ENCODE measurements at regions of chr1 and their contacts with region 1.

Region 1: DNA sequence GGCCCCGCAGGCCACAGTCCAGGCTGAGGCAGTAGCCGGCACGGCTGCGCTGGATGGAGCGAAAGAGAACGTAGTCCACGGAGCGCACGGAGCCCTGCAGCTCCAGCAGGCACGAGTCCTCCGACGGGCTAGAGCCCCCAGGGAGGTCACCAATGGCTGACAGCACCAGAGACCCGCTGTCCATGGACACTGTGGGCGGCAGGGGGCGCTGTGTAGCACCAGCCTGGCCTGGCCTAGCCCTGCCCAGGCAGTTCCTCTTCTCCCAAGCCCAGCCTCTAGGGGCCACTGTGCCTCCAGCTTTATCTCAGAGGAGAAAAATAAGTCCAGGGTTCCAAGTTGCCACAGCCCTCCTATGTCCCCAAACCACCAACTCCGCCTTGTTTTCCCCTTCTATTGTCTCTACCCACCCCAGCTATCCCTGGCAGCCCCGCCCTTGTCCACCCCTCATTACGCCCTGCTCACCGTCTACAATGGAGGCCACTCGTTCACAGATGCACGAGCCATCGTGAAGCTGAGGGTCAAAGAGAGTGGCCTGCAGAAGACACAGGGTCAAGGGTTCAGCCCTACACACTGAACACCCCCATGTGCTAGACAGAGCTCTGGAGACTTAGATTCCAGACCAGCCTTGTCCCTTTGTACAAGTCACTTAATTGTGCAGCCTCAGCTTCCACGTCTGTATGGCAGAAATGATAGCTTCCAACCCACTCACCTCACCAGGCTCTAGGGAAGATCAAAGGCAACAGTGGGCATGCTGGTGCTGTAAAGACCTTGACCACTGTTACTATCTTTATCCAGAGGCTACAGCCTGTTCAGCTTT is 4.4 kb downstream of the ENTREP3 start:
- DNase-seq: no peak
- H3K4me3 ChIP-seq: no peak overlapping the region
- CTCF ChIP-seq: peak; percentile 100

Region 2: GRCh38 chr1:155172732-155173477 is 77.9 kb before region 1 on chr1 and contains the start of gene KRTCAP2:
- CTCF ChIA-PET with region 1: interaction called, 24 read pairs
- POLR2A ChIA-PET with region 1: interaction called, 3 read pairs
- DNase-seq: peak; percentile 75
- H3K4me3 ChIP-seq: peak within 1 kb of the TSS; percentile 98
- CTCF ChIP-seq: peak; percentile 96

Region 3: DNA sequence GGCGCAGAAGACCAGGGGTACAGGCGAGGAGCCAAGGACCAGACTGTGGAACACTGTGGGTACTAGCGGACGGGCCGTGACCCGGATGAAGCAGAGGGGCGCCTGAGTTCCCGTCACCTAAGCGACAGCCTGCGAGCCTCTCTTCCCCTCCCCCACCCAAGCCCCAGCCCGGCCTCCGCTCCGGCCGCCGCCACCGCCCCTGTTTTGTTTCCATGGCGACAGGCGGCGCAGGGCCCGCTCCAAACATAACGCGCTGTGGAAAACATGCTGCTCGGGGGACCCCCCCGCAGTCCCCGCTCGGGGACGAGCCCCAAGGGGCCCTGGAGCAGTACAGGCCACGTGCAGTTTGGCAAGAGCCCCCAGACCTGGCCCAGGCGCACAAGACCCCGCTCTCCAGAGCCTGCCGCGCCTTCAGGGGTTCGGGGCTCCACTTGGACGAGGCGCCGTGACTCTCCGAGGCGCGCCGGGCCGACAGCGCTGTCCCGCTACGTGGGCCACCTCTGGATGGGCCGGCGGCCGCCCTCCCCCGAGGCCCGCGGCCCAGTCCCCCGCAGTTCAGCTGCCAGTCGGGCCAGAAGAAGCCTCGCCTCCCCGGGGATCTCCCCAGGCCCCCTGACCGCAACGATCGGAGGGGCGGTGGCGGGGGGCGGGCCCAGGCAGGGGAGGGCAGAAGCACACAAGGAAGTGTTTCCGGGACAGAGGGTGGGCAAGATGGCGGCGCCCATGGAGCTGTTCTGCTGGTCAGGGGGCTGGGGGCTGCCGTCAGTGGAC is 42.1 kb before region 1 on chr1 and contains the start of gene MTX1:
- CTCF ChIA-PET with region 1: interaction called, 62 read pairs
- POLR2A ChIA-PET with region 1: interaction called, 4 read pairs
- DNase-seq: no peak
- H3K4me3 ChIP-seq: peak within 1 kb of the TSS; percentile 89
- CTCF ChIP-seq: no peak

Region 4: GRCh38 chr1:155236441-155236840 is 14.4 kb before region 1 on chr1:
- CTCF ChIA-PET with region 1: interaction called, 56 read pairs
- POLR2A ChIA-PET with region 1: no interaction called
- DNase-seq: no peak
- H3K4me3 ChIP-seq: no peak overlapping the region
- CTCF ChIP-seq: no peak

Region 5: DNA sequence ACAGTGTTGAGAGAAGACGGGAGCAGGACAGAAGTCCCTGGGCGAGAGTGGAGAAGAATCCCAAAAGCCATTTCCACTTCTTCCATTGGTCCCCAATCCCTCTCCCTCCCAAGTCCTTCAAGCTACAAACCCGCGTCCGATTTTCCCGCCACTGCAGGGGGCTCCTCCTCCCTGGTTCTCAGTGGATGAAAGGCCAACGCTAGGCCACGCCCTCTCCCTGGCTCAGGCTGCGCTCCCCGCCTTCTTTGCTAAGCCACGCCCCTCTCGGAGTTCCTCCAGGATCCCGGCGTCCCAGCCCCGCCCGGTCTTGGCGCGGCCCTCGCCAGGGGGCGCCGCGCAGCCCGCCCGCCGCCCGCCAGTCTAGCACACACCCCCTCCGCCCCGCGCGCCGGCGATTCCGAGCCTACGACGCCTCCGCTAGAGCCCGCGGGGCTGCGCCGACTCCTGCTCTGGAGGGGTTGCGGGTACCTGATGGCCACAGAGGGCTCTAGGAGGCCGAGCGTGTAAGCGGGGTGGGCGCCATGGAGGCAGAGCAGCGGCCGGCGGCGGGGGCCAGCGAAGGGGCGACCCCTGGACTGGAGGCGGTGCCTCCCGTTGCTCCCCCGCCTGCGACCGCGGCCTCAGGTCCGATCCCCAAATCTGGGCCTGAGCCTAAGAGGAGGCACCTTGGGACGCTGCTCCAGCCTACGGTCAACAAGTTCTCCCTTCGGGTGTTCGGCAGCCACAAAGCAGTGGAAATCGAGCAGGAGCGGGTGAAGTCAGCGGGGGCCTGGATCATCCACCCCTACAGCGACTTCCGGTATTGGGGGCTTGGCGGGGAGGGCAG is 26.4 kb after region 1 on chr1 and contains the start of gene HCN3:
- CTCF ChIA-PET with region 1: interaction called, 112 read pairs
- POLR2A ChIA-PET with region 1: no interaction called
- DNase-seq: peak; percentile 49
- H3K4me3 ChIP-seq: peak within 1 kb of the TSS; percentile 74
- CTCF ChIP-seq: peak; percentile 57

Region 6: DNA sequence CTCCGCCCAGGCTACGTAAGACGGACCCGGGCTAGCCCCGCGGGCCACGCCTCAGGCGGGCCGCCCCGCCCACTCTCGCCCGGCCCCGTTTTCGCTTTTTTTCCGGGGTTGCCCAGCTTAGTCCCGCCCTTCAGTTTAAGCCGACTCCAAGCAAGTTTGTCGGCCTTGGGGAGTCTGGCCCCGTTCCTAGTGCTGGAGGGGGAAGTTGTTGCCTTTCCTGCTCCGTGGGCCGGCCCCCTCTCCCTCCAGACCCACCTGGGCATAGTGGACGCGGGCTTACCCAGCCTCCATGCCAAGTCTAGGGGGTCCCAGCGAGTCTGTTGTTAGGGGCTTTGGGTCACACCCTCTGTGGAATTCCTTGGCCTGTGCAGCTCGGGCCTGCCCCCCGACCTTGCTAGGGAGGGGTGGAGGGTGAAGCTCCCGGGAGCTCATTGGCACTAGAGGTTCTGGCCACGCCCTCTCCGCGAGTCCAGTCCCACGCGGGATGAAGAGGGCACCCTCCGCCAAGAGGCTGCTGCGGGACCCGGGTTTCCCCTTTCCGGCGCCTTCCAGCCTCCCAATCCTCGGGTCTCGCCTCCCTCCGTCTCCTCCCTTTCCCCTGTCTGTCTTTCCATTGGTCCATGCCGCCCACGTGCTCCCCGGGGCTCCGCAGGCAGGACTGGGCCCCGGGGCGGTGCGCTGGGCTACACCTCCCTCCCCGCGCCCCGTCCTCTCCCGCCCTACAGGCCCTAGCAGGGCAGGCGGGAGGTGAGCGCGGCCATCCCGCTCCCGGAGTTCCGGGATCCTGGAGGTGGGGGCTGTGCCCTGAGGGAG is 73.2 kb after region 1 on chr1:
- CTCF ChIA-PET with region 1: interaction called, 253 read pairs
- POLR2A ChIA-PET with region 1: interaction called, 10 read pairs
- DNase-seq: peak; percentile 70
- H3K4me3 ChIP-seq: peak overlapping the region; percentile 84
- CTCF ChIP-seq: no peak

Region 7: DNA sequence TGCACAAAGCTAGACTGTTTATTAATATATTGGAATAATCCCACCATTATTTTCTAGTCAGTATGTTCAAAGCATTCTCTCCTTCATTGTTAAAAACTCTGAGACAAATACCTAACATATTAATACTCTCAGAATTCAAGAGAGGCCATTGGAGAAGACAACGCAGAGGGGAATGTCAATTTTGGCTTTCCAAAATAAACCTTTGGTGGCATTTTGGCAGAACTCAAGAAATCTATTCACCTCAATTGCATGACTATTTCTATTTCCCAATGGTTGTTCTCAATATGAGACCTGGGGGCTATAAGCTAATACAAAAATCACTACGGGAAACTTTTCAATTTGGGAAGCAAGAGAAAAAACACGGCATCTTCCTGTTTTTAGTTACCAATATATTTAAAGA is 128.3 kb after region 1 on chr1:
- CTCF ChIA-PET with region 1: no interaction called
- POLR2A ChIA-PET with region 1: no interaction called
- DNase-seq: no peak
- H3K4me3 ChIP-seq: no peak overlapping the region
- CTCF ChIP-seq: no peak

Region 8: GRCh38 chr1:155392898-155393411 is 142.1 kb after region 1 on chr1:
- CTCF ChIA-PET with region 1: no interaction called
- POLR2A ChIA-PET with region 1: no interaction called
- DNase-seq: no peak
- H3K4me3 ChIP-seq: no peak overlapping the region
- CTCF ChIP-seq: no peak

Region 9: GRCh38 chr1:155598842-155599331 is 348.0 kb after region 1 on chr1:
- CTCF ChIA-PET with region 1: interaction called, 29 read pairs
- POLR2A ChIA-PET with region 1: no interaction called
- DNase-seq: peak; percentile 2
- H3K4me3 ChIP-seq: peak overlapping the region; percentile 8
- CTCF ChIP-seq: no peak